Activated CD4-positive, alpha-beta memory T cell treated with anti-CD3 and anti-CD28 coated beads for 36 hours (primary cell): ENCODE measurements at regions of chr6 and their contacts with region 1.

Region 1: DNA sequence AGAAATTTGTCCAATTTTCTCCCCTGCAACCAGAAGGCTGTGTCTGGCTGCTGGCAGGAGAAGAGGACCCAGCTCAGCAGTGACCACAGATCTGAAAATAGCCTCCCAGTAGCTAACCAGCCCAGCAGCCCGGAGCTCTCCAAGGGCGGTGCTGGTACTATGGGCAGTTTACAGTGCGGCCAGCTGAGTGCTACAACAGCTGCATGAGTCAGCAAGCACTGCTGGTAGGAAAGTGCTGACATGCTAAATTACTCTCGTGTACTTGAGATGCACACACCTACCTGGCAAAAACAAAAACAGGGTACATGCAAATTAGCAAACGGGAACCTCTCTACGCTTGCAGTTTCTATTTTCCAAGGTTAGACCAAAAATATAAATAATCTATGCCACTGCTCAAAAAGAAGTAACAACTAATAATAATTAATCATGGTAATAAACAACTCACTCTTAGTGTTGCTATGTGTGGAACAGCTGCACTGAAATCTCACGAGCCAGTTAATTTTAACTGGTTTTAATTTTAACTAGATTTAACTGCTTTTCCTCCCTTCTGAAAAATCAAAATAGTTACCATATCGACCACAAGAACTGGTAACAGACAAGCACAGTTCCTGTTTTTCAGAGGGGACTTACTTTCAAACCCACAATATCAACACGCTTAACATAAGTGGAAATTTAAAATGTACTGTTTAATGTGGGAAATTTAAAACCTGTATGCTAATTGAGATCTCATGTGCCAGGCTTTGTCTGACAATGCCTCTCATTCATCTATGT is 10.8 kb downstream of the BACH2 start:
- DNase-seq: peak; percentile 75
- H3K4me3 Mint-ChIP-seq: peak overlapping the region; percentile 67
- H3K27ac Mint-ChIP-seq: peak overlapping the region; percentile 89
- H3K4me1 Mint-ChIP-seq: peaks cover 91% of the 10 kb centered on the region
- H3K27me3 Mint-ChIP-seq: no peaks in the 10 kb centered on the region

Region 2: GRCh38 chr6:88748141-88748540 is 1537.7 kb before region 1 on chr6:
- CTCF ChIA-PET with region 1: no interaction called
- POLR2A ChIA-PET with region 1: no interaction called
- intact Hi-C with region 1: no loop called
- DNase-seq: no peak
- H3K4me3 Mint-ChIP-seq: no peak overlapping the region
- H3K27ac Mint-ChIP-seq: no peak overlapping the region
- H3K4me1 Mint-ChIP-seq: no peaks in the 10 kb centered on the region
- H3K27me3 Mint-ChIP-seq: no peaks in the 10 kb centered on the region

Region 3: GRCh38 chr6:89273816-89274215 is 1012.0 kb before region 1 on chr6:
- CTCF ChIA-PET with region 1: no interaction called
- POLR2A ChIA-PET with region 1: no interaction called
- intact Hi-C with region 1: no loop called
- DNase-seq: no peak
- H3K4me3 Mint-ChIP-seq: no peak overlapping the region
- H3K27ac Mint-ChIP-seq: no peak overlapping the region
- H3K4me1 Mint-ChIP-seq: no peaks in the 10 kb centered on the region
- H3K27me3 Mint-ChIP-seq: no peaks in the 10 kb centered on the region

Region 4: GRCh38 chr6:89952686-89953085 is 333.1 kb before region 1 on chr6:
- CTCF ChIA-PET with region 1: interaction called, 3 read pairs
- POLR2A ChIA-PET with region 1: interaction called, 4 read pairs
- intact Hi-C with region 1: loop called (anchors 1 kb)
- DNase-seq: peak; percentile 72
- H3K4me3 Mint-ChIP-seq: peak overlapping the region; percentile 8
- H3K27ac Mint-ChIP-seq: peak overlapping the region; percentile 69
- H3K4me1 Mint-ChIP-seq: peaks cover 68% of the 10 kb centered on the region
- H3K27me3 Mint-ChIP-seq: no peaks in the 10 kb centered on the region

Region 5: DNA sequence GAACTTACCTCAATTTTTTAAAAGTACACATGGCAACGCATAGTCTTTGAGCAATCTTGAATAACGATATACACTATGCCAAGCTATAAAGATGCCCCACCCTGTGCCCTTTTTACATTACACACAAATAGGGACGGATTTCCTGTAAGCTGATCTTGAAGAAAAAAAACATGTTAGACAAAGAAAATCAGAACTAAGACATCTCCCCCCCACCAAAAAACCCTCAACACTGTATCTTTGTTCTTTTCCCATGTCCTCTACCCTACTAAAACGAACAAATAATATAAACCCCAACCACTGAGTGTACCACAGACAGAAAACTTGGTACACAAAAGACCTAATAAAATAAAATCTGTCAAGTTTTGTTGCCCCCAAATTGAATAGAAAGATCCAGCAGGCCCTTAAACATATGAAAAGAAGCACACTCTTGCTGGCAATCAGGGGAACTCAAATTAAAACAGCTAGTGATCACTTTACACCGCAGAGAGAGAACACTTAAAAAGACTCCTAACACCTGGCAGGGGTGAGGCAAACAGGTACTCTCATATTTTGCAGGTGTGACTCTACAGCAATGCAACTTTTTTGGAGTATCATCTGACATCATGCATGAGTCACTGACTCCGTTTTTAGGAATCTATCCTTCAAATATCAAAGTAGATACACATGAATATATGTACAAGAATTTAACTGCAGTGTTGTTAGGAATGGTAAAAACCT is 18.7 kb before region 1 on chr6:
- CTCF ChIA-PET with region 1: interaction called, 10 read pairs
- POLR2A ChIA-PET with region 1: interaction called, 30 read pairs
- intact Hi-C with region 1: no loop called
- DNase-seq: no peak
- H3K4me3 Mint-ChIP-seq: peak overlapping the region; percentile 6
- H3K27ac Mint-ChIP-seq: peak overlapping the region; percentile 77
- H3K4me1 Mint-ChIP-seq: peaks cover 87% of the 10 kb centered on the region
- H3K27me3 Mint-ChIP-seq: no peaks in the 10 kb centered on the region

Region 6: DNA sequence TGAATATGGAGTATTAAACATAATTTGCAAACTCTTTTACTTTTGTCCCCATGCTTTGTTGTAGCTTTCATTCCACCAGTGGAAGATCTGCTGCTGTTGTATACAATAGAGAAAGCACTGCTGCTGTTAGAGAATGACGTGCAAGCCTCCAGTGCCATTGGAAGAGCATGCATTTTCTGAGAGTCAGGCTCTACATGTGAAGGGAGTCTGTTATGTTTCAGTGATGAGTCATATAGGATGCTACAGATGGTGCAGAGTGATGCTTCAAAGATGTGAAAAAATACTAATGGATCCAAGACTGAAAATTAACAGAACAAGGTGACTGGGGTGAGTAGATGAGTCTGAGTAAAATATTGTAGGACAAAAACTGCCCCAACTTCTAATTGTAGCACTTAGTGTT is 33.2 kb after region 1 on chr6:
- CTCF ChIA-PET with region 1: interaction called, 3 read pairs
- POLR2A ChIA-PET with region 1: interaction called, 6 read pairs
- intact Hi-C with region 1: loop called (anchors 1 kb)
- DNase-seq: peak; percentile 51
- H3K4me3 Mint-ChIP-seq: no peak overlapping the region
- H3K27ac Mint-ChIP-seq: peak overlapping the region; percentile 59
- H3K4me1 Mint-ChIP-seq: peaks cover 29% of the 10 kb centered on the region
- H3K27me3 Mint-ChIP-seq: peaks cover 3% of the 10 kb centered on the region

Region 7: GRCh38 chr6:90425161-90425641 is 139.4 kb after region 1 on chr6:
- CTCF ChIA-PET with region 1: interaction called, 3 read pairs
- POLR2A ChIA-PET with region 1: interaction called, 9 read pairs
- intact Hi-C with region 1: loop called (anchors 1 kb)
- DNase-seq: peak; percentile 52
- H3K4me3 Mint-ChIP-seq: peak overlapping the region; percentile 59
- H3K27ac Mint-ChIP-seq: peak overlapping the region; percentile 95
- H3K4me1 Mint-ChIP-seq: peaks cover 38% of the 10 kb centered on the region
- H3K27me3 Mint-ChIP-seq: no peaks in the 10 kb centered on the region

Region 8: GRCh38 chr6:90472744-90473143 is 186.9 kb after region 1 on chr6:
- CTCF ChIA-PET with region 1: interaction called, 144 read pairs
- POLR2A ChIA-PET with region 1: interaction called, 16 read pairs
- intact Hi-C with region 1: loop called (anchors 2 kb)
- DNase-seq: peak; percentile 69
- H3K4me3 Mint-ChIP-seq: peak overlapping the region; percentile 54
- H3K27ac Mint-ChIP-seq: peak overlapping the region; percentile 83
- H3K4me1 Mint-ChIP-seq: peaks cover 88% of the 10 kb centered on the region
- H3K27me3 Mint-ChIP-seq: peaks cover 1% of the 10 kb centered on the region